ENCODE measurements at regions of chr5 and their contacts with region 1.

Region 1: DNA sequence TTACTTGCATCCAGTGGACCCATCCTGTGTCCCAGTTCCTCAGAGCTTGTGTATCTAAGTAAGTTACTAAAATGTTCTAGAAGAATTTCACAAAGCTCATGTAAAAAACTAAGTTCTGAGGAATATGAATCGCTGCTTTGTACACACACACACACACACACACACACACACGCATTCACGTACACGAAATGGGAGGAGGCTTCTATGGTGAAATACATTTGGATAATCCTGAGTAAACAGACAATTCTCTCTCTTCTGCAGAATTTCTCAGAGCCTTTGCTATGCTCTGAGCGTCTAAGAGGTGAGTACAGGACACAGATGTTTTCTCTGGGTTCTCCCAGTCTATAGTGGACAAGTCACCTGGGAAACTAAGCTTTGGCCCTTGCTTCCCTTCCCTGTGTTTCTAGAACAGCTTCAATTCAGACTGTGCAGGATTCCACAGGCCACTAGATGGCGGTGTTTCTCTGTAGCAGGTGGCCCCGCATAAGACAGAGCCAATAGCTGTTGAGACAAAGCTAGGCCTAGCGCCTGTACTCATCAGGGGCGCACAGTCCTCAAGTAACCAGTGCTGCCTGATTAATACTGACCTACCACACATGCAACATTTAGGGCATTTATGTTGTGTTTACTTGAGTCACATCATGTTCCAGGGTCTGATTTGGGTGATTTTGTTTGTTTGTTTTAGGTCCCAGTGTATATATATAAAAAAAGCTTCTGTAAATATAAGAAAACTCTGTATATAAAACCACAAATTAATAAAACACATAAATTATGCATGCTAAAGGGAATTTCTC is 114.8 kb downstream of the LIFR start:
- DNase-seq: peak; percentile 92
- H3K4me3 Mint-ChIP-seq: no peak overlapping the region
- H3K27ac Mint-ChIP-seq: no peak overlapping the region
- H3K4me1 Mint-ChIP-seq: peaks cover 10% of the 10 kb centered on the region
- H3K27me3 Mint-ChIP-seq: no peaks in the 10 kb centered on the region
- CTCF ChIP-seq: peak; percentile 97

Region 2: DNA sequence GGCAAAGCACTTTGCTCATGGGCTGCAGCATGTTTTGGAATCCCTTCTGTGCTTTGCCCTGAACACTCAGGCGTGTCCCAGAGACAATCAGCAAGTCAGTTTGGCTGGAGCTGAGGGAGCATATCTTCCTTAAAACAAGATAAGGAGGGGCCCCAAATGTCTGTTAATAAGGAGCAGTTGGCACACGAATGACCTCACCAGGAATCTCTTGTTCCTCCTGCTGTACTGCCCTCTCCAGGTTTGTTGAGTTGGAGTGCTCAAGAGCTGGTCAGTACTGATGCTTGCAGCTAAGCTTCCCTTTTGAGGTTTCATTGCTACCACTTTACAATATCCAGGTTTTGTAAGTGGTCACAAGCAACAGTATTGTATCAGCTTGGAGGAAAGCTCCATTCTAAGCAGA is 284.6 kb before region 1 on chr5:
- CTCF ChIA-PET with region 1: no interaction called
- POLR2A ChIA-PET with region 1: no interaction called
- intact Hi-C with region 1: no loop called
- DNase-seq: no peak
- H3K4me3 Mint-ChIP-seq: no peak overlapping the region
- H3K27ac Mint-ChIP-seq: no peak overlapping the region
- H3K4me1 Mint-ChIP-seq: no peaks in the 10 kb centered on the region
- H3K27me3 Mint-ChIP-seq: peaks cover 12% of the 10 kb centered on the region
- CTCF ChIP-seq: no peak

Region 3: GRCh38 chr5:38420691-38421390 is 20.8 kb before region 1 on chr5:
- CTCF ChIA-PET with region 1: interaction called, 80 read pairs
- POLR2A ChIA-PET with region 1: interaction called, 15 read pairs
- intact Hi-C with region 1: no loop called
- DNase-seq: peak; percentile 84
- H3K4me3 Mint-ChIP-seq: no peak overlapping the region
- H3K27ac Mint-ChIP-seq: no peak overlapping the region
- H3K4me1 Mint-ChIP-seq: peaks cover 8% of the 10 kb centered on the region
- H3K27me3 Mint-ChIP-seq: no peaks in the 10 kb centered on the region
- CTCF ChIP-seq: peak; percentile 67

Region 4: GRCh38 chr5:38463634-38464521 is 22.2 kb after region 1 on chr5:
- CTCF ChIA-PET with region 1: interaction called, 20 read pairs
- POLR2A ChIA-PET with region 1: interaction called, 18 read pairs
- intact Hi-C with region 1: no loop called
- DNase-seq: peak; percentile 81
- H3K4me3 Mint-ChIP-seq: no peak overlapping the region
- H3K27ac Mint-ChIP-seq: no peak overlapping the region
- H3K4me1 Mint-ChIP-seq: peaks cover 14% of the 10 kb centered on the region
- H3K27me3 Mint-ChIP-seq: no peaks in the 10 kb centered on the region
- CTCF ChIP-seq: no peak

Region 5: DNA sequence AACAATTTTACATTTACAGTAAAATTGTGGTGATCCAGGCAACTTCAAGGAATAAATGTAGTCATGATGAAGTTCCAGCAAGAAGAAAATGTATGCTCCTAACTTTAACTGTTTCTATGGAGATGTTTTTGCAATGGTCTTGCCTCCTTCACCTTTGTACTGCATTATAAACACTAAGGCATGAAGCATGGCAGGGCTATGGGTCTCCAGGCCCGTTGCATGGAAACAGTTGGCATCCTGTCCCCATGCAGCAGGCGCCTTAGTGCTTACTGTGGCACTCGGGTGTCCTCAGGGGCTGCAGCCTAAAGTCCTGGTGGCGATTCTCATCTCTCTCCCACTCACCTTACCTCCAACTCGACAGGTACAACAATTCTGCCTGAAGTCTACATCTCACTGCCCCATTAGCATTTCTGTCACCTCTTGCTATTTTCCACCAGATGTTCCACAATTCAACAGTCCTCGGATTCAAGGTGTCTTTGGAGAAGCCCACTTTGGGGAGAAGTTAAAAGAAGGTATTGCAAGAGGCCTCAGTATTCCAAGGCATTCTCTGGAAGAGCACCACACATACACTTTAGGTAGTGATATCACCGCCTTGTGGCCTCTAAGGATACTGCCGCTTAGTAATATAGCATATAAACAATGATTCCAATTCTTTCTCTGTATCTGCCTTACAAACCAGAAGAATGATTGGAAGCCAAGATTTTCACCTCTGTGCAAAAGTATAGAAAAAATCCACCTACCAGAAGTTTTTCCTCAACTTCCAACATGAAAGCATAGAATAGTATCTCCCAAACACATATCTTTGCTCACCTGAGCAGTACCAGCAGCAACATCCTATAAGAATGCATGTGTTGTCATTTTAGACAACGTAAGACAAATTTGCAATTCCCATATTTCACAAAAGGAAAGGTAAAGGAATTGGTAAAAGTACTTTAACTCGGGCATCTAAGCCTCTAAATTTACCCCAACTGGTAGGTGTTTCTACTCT is 109.7 kb after region 1 on chr5:
- CTCF ChIA-PET with region 1: interaction called, 62 read pairs
- POLR2A ChIA-PET with region 1: interaction called, 8 read pairs
- intact Hi-C with region 1: loop called (anchors 1 kb)
- DNase-seq: peak; percentile 72
- H3K4me3 Mint-ChIP-seq: no peak overlapping the region
- H3K27ac Mint-ChIP-seq: no peak overlapping the region
- H3K4me1 Mint-ChIP-seq: peaks cover 5% of the 10 kb centered on the region
- H3K27me3 Mint-ChIP-seq: no peaks in the 10 kb centered on the region
- CTCF ChIP-seq: peak; percentile 57

Region 6: GRCh38 chr5:38707352-38708210 is 265.9 kb after region 1 on chr5:
- CTCF ChIA-PET with region 1: no interaction called
- POLR2A ChIA-PET with region 1: no interaction called
- intact Hi-C with region 1: no loop called
- DNase-seq: no peak
- H3K4me3 Mint-ChIP-seq: no peak overlapping the region
- H3K27ac Mint-ChIP-seq: peak overlapping the region; percentile 33
- H3K4me1 Mint-ChIP-seq: no peaks in the 10 kb centered on the region
- H3K27me3 Mint-ChIP-seq: no peaks in the 10 kb centered on the region
- CTCF ChIP-seq: no peak

Region 7: GRCh38 chr5:38780950-38781349 is 339.3 kb after region 1 on chr5:
- CTCF ChIA-PET with region 1: interaction called, 45 read pairs
- POLR2A ChIA-PET with region 1: interaction called, 6 read pairs
- intact Hi-C with region 1: loop called (anchors 1 kb)
- DNase-seq: peak; percentile 88
- H3K4me3 Mint-ChIP-seq: no peak overlapping the region
- H3K27ac Mint-ChIP-seq: no peak overlapping the region
- H3K4me1 Mint-ChIP-seq: peaks cover 29% of the 10 kb centered on the region
- H3K27me3 Mint-ChIP-seq: peaks cover 13% of the 10 kb centered on the region
- CTCF ChIP-seq: no peak